Heart left ventricle (tissue), 16 donors: ENCODE measurements at regions of chr10 and their contacts with region 1.

Region 1: GRCh38 chr10:50291261-50291850 is 40.0 kb upstream of the ASAH2 start:
- DNase-seq: no peak
- ATAC-seq: peak in 3 of 4 donors; percentile 50 to 57 (median 52)
- H3K4me3 ChIP-seq: no peak overlapping the region
- H3K27ac ChIP-seq: no peak overlapping the region
- H3K4me1 ChIP-seq: peaks cover 0 to 10% (median 0%) of the 10 kb centered on the region in 12 donors
- H3K27me3 ChIP-seq: no peaks in the 10 kb centered on the region
- CTCF ChIP-seq: peak in 11 of 12 donors; percentile 14 to 61 (median 51)
- POLR2A ChIP-seq: no peak

Region 2: GRCh38 chr10:50437248-50437647 is 145.9 kb after region 1 on chr10:
- intact Hi-C with region 1: no loop called
- DNase-seq: no peak
- ATAC-seq: no peak
- H3K4me3 ChIP-seq: no peak overlapping the region
- H3K27ac ChIP-seq: peak overlapping the region in 2 of 12 donors; percentile 6
- H3K4me1 ChIP-seq: peaks cover 0 to 43% (median 0%) of the 10 kb centered on the region in 12 donors
- H3K27me3 ChIP-seq: no peaks in the 10 kb centered on the region
- CTCF ChIP-seq: no peak
- POLR2A ChIP-seq: no peak

Region 3: GRCh38 chr10:50636618-50637579 is 345.5 kb after region 1 on chr10:
- intact Hi-C with region 1: loop called in 1 of 10 experiments (anchors 10 kb)
- DNase-seq: no peak
- ATAC-seq: no peak
- H3K4me3 ChIP-seq: no peak overlapping the region
- H3K27ac ChIP-seq: no peak overlapping the region
- H3K4me1 ChIP-seq: peaks cover 0 to 18% (median 0%) of the 10 kb centered on the region in 12 donors
- H3K27me3 ChIP-seq: no peaks in the 10 kb centered on the region
- CTCF ChIP-seq: no peak
- POLR2A ChIP-seq: no peak

Region 4: DNA sequence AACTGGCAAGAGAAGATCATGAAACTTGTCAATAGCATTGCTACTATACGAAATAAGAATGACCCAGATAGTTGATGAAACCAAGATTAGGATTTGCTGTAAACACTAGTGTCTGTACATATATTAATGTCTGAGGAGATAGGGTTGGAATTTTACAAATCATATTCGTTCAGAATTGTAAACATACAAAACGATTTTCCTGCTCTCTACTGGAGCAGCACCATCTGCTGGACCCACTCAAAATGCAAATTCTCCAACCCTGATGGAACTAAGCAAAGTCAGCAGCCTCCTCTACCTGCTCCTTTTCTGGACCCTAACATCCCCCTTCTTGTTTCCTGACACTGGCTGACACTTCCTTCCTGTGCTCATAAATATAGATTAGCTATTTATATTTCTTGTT is 361.8 kb after region 1 on chr10:
- intact Hi-C with region 1: loop called in 1 of 10 experiments (anchors 5 kb)
- DNase-seq: no peak
- ATAC-seq: peak in 3 of 4 donors; percentile 29 to 55 (median 37)
- H3K4me3 ChIP-seq: no peak overlapping the region
- H3K27ac ChIP-seq: no peak overlapping the region
- H3K4me1 ChIP-seq: peaks cover 0 to 18% (median 2%) of the 10 kb centered on the region in 12 donors
- H3K27me3 ChIP-seq: no peaks in the 10 kb centered on the region
- CTCF ChIP-seq: peak in 11 of 12 donors; percentile 34 to 71 (median 61)
- POLR2A ChIP-seq: no peak